ENCODE measurements at regions of chr12 and their contacts with region 1.

Region 1: DNA sequence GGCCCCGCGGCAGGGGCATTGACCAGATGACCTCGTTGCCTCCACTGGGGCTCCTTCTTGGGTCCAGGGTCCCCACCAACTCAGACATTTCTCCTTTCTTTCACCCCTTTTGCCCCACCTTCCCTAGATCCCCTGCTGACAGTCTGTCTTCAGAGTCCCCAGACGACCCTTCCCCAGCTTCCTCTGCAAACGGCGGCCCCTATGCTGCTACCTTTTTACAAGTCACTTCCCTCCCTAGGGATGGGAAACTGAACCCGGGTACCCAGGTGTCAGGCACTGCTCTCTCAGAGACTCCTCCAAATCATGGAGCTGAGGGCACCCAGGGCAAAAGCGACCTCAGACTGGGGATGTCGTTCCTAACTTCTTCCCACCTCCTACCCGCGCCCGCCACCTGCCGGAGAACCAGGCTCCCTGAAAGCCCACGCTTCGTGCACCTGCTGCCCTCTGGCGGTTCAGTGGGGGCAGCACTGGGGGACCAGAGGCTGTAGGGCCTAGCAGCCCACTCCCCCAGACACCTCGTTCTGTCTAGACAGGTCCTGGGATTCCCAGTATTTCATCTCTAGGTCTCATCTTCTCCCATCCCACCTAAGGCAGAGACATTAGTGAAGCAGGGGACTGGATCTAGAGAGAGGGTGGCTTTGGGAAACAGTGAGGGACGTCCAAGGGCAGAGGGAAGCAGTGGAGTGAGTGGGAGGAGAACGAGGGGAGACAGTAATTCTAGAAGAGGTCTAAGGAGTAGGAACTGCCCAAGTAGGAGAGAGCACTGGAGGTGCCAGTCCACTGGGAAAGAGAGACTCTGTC is 4.9 kb downstream of the ZNF385A start:
- DNase-seq: peak; percentile 84
- H3K4me3 Mint-ChIP-seq: peak overlapping the region; percentile 70
- H3K27ac Mint-ChIP-seq: no peak overlapping the region
- H3K4me1 Mint-ChIP-seq: peaks cover 13% of the 10 kb centered on the region
- H3K27me3 Mint-ChIP-seq: peaks cover 6% of the 10 kb centered on the region

Region 2: GRCh38 chr12:54220092-54220557 is 159.5 kb before region 1 on chr12:
- intact Hi-C with region 1: loop called (anchors 1 kb)
- DNase-seq: peak; percentile 52
- H3K4me3 Mint-ChIP-seq: no peak overlapping the region
- H3K27ac Mint-ChIP-seq: no peak overlapping the region
- H3K4me1 Mint-ChIP-seq: peaks cover 16% of the 10 kb centered on the region
- H3K27me3 Mint-ChIP-seq: peaks cover 2% of the 10 kb centered on the region

Region 3: DNA sequence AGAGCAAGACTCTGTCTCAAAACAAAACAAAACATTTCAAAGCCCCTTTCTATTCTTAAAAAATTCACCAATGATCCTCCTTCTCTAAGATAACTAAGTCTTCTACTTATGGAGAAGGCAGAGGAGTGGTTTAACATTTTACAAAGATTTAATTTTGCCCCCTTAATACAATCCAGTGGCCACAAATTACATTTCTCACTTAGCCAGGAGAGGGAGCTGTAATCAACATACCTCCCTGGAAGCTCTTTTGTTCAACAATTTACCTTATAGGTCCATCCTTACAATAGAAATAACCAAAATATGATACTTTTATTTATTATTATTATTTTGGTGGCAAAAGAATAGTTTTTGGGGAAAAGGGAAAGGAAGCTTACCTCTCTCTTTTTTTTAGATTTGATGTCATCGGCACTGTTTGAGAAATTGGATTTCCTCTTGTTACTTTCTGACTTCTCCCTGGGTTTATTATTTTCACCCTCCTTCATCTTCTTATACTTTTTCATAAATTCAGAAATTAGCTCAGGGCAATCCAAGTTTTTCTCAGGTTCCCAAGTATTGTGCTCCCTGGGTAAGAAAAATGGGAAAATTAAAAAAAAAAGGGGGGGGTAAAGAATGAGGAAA is 127.8 kb before region 1 on chr12:
- intact Hi-C with region 1: loop called (anchors 1 kb)
- DNase-seq: no peak
- H3K4me3 Mint-ChIP-seq: no peak overlapping the region
- H3K27ac Mint-ChIP-seq: no peak overlapping the region
- H3K4me1 Mint-ChIP-seq: peaks cover 6% of the 10 kb centered on the region
- H3K27me3 Mint-ChIP-seq: no peaks in the 10 kb centered on the region

Region 4: DNA sequence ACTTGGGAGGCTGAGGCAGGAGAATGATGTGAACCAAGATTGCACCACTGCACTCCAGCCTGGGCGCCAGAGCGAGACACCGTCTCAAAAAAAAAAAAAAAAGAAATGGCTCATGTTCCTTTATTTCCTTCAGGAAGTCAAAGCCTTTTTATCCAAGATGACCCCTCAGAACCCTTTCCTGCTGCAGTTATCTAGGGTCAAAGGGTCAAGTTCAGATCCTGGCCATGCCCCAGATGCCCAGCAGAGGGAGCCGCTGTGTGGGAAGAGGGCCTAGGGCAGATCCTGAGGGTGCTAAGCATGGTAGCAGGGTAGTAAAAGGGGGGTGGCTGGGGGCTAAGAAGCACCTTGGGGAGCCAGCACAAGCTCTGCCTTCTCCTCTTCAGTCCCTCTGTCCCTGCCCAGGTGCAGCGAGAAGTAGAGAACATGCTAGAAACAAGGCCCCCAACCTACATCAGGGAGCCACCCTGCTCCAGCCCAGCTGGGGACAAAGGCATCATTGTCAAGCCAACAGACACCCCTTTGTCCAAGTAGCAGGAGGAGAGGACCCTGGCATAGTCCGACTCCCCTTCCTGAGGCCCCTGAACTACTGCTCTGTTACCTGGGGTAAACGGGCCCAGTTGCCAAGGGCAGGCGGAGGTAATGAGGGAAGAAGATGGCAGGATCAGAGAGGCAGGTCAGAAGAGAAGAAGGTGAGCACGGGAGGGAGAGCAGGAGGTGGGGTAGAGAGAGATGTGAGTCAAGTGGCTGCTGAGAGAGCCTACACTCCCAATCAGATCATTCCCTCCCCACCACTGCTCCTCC is 85.2 kb before region 1 on chr12:
- intact Hi-C with region 1: loop called (anchors 1 kb)
- DNase-seq: peak; percentile 46
- H3K4me3 Mint-ChIP-seq: no peak overlapping the region
- H3K27ac Mint-ChIP-seq: no peak overlapping the region
- H3K4me1 Mint-ChIP-seq: peaks cover 4% of the 10 kb centered on the region
- H3K27me3 Mint-ChIP-seq: peaks cover 16% of the 10 kb centered on the region

Region 5: GRCh38 chr12:54390668-54391551 is 11.3 kb after region 1 on chr12:
- intact Hi-C with region 1: loop called (anchors 1 kb)
- DNase-seq: peak; percentile 39
- H3K4me3 Mint-ChIP-seq: peak overlapping the region; percentile 66
- H3K27ac Mint-ChIP-seq: no peak overlapping the region
- H3K4me1 Mint-ChIP-seq: peaks cover 22% of the 10 kb centered on the region
- H3K27me3 Mint-ChIP-seq: no peaks in the 10 kb centered on the region

Region 6: GRCh38 chr12:54439521-54440255 is 60.1 kb after region 1 on chr12:
- intact Hi-C with region 1: no loop called
- DNase-seq: no peak
- H3K4me3 Mint-ChIP-seq: no peak overlapping the region
- H3K27ac Mint-ChIP-seq: peak overlapping the region; percentile 62
- H3K4me1 Mint-ChIP-seq: peaks cover 16% of the 10 kb centered on the region
- H3K27me3 Mint-ChIP-seq: peaks cover 9% of the 10 kb centered on the region